GM12878 (cell line): ENCODE measurements at regions of chr11 and their contacts with region 1.

Region 1: DNA sequence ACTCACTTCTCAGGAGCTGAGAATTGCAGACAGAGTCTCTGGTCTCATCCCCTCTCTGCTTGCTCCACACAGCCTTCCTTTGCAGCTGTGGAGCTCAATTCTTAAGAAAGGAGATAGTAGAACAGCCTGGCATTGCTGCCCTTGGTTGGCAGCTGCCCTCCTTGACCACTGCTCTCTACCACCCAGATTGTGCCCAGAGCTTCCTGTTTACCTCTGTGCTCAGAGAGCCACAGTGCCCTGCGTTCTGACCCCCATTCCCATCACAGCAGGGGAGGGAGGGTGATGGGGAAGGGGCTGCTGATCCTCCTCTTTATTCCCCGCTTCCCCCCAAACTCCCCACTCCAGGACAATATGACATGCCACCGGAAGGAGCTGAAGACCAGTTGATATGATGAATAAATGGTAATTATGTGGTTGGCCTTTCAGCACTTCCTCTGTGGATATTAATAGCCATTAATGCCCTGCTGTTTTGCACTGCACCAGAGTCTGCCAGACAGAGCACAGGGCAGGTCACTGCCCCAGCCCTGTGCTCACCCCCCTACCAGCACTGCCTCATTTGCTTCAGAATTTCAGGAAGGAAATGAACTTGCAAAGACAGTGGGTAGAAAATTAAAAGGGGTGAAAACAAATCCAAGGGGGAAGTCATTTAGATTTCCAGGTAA is 426.8 kb upstream of the CADM1 start:
- DNase-seq: no peak
- ATAC-seq: peak; percentile 56
- H3K4me3 ChIP-seq: no peak overlapping the region
- H3K27ac ChIP-seq: peak overlapping the region; percentile 95
- H3K4me1 ChIP-seq: peaks cover 59% of the 10 kb centered on the region
- H3K27me3 ChIP-seq: no peaks in the 10 kb centered on the region
- CTCF ChIP-seq: no peak
- EP300 ChIP-seq: no peak; a peak in 1 of 4 replicates
- POLR2A ChIP-seq: no peak
- RAD21 ChIP-seq: no peak

Region 2: DNA sequence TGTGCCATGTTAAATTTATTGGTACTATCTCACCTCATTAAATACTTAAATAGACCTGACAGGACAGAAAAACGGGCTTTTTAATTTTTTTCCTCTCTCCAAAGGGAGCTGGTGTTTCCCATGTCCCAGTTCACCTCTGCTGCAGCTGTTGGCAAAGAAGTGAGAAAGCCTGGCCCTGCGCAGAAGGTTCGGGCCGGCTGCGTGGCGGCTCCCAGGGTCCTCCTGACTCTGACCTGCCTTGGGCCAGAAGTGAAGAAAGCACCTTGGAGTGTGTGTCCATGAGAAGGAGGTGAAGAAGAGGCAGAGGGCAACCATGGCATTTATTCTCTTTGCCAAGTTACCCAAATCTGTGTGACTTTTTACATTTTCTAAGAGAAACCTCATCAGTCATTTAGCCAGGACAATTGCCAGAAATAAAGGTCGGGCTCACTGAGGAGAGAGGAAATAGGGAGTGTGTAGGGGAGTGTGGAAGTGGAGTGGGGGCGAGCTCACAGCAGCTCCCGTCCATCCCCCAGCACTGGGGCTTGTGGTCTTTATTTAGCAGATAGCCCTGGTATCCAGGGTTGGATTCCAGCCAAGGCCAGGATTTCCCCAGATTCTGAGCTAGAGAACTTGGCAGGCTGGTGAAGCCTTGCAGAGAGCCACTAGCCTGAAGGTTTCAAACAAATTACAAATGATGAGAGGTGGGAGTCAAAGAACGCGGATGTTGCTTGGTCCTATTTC is 324.4 kb before region 1 on chr11:
- CTCF ChIA-PET with region 1: no interaction called
- POLR2A ChIA-PET with region 1: no interaction called
- RAD21 ChIA-PET with region 1: no interaction called
- SMC1A ChIA-PET with region 1: no interaction called
- in situ Hi-C with region 1: no loop called
- intact Hi-C with region 1: no loop called
- DNase-seq: no peak
- ATAC-seq: no peak
- H3K4me3 ChIP-seq: no peak overlapping the region
- H3K27ac ChIP-seq: no peak overlapping the region
- H3K4me1 ChIP-seq: no peaks in the 10 kb centered on the region
- H3K27me3 ChIP-seq: no peaks in the 10 kb centered on the region
- CTCF ChIP-seq: no peak
- EP300 ChIP-seq: no peak
- POLR2A ChIP-seq: no peak
- RAD21 ChIP-seq: no peak

Region 3: GRCh38 chr11:115919341-115920091 is 11.5 kb before region 1 on chr11:
- CTCF ChIA-PET with region 1: interaction called, 61 read pairs
- POLR2A ChIA-PET with region 1: interaction called, 86 read pairs
- RAD21 ChIA-PET with region 1: interaction called, 140 read pairs
- SMC1A ChIA-PET with region 1: interaction called, 207 read pairs
- in situ Hi-C with region 1: no loop called
- intact Hi-C with region 1: no loop called
- DNase-seq: peak; percentile 91
- ATAC-seq: peak; percentile 66
- H3K4me3 ChIP-seq: peak overlapping the region; percentile 15; the same call in 1 of the 2 replicates
- H3K27ac ChIP-seq: peak overlapping the region; percentile 94
- H3K4me1 ChIP-seq: peaks cover 70% of the 10 kb centered on the region
- H3K27me3 ChIP-seq: no peaks in the 10 kb centered on the region
- CTCF ChIP-seq: no peak
- EP300 ChIP-seq: peak; percentile 92 to 93; a peak in 3 of 4 replicates
- POLR2A ChIP-seq: peak; percentile 70
- RAD21 ChIP-seq: peak; percentile 12; the same call in 1 of the 2 replicates

Region 4: DNA sequence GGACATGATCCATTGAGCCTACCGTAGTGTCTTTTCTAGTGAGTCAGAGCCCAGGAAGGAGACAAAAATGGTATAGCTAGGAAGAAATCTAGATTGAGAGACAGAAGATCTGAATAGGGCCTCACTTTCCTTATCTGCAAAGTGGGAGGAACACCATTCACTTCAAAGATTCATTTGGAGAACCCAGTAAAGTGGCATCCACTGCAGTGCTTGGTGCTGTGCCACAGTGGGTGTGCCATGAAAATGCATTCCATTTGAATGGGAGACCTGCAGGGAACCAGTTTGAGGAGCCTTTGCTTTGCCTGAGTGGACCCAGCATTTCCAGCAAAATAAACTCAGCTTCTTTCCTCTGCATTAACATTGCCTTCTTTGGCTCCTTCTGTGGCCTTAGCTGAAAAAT is 43.7 kb after region 1 on chr11:
- CTCF ChIA-PET with region 1: interaction called, 4 read pairs
- POLR2A ChIA-PET with region 1: interaction called, 10 read pairs
- RAD21 ChIA-PET with region 1: interaction called, 12 read pairs
- SMC1A ChIA-PET with region 1: interaction called, 19 read pairs
- in situ Hi-C with region 1: no loop called
- intact Hi-C with region 1: loop called (anchors 2 kb)
- DNase-seq: no peak
- ATAC-seq: peak; percentile 12
- H3K4me3 ChIP-seq: 0 out of 2 replicates have a peak overlapping the region, but pooled peaks have one; percentile 65
- H3K27ac ChIP-seq: no peak overlapping the region
- H3K4me1 ChIP-seq: peaks cover 4% of the 10 kb centered on the region; the same call in 1 of the 2 replicates
- H3K27me3 ChIP-seq: no peaks in the 10 kb centered on the region
- CTCF ChIP-seq: no peak
- EP300 ChIP-seq: no peak
- POLR2A ChIP-seq: no peak
- RAD21 ChIP-seq: no peak

Region 5: GRCh38 chr11:115990004-115990447 is 59.0 kb after region 1 on chr11:
- CTCF ChIA-PET with region 1: interaction called, 39 read pairs
- POLR2A ChIA-PET with region 1: interaction called, 4 read pairs
- RAD21 ChIA-PET with region 1: interaction called, 5 read pairs
- SMC1A ChIA-PET with region 1: interaction called, 27 read pairs
- in situ Hi-C with region 1: loop called (anchors 5 kb)
- intact Hi-C with region 1: no loop called
- DNase-seq: no peak
- ATAC-seq: peak; percentile 91
- H3K4me3 ChIP-seq: no peak overlapping the region
- H3K27ac ChIP-seq: no peak overlapping the region
- H3K4me1 ChIP-seq: no peaks in the 10 kb centered on the region
- H3K27me3 ChIP-seq: no peaks in the 10 kb centered on the region
- CTCF ChIP-seq: peak; percentile 60 to 81 (median 62); a peak in 5 of 6 replicates
- EP300 ChIP-seq: no peak
- POLR2A ChIP-seq: no peak
- RAD21 ChIP-seq: peak; percentile 56